Ascending aorta (tissue), 2 donors: ENCODE measurements at regions of chr4 and their contacts with region 1.

Region 1: DNA sequence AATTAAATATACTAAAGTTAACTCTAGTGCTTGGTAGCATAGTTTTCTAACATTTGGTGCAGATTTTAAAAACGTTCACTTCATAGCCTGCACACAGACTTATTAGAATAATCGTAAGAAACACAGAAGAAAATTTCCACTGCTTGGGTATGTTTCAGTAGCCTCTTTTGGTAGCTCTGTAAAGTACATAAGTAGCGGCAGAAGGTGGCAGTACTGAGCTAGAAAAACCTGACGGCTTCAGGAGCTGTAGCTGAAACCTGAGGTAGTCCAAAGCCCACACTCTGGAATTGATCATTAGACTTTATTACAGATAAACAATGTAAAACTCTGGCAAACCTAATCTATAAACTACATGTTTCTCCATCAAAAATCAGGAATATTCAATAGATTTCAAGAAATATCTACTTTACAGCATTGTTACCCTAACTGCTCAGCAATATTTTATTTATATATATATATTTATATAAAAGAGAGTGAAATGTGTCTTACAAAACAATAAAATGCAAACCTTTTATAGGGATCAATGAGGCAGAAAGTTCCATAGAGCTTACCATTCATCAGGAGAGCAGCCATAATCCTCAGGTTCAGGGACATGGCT is 88.2 kb downstream of the ATP8A1 start:
- DNase-seq: peak in 1 of 2 donors; percentile 71
- H3K4me3 ChIP-seq: no peak overlapping the region
- H3K27ac ChIP-seq: no peak overlapping the region
- H3K4me1 ChIP-seq: peaks cover 0 to 5% of the 10 kb centered on the region in 2 donors
- H3K27me3 ChIP-seq: no peaks in the 10 kb centered on the region
- CTCF ChIP-seq: peak; percentile 46 to 75 (median 62)

Region 2: GRCh38 chr4:42420140-42420539 is 148.6 kb before region 1 on chr4:
- intact Hi-C with region 1: no loop called
- DNase-seq: no peak
- H3K4me3 ChIP-seq: no peak overlapping the region
- H3K27ac ChIP-seq: no peak overlapping the region
- H3K4me1 ChIP-seq: no peaks in the 10 kb centered on the region
- H3K27me3 ChIP-seq: no peaks in the 10 kb centered on the region
- CTCF ChIP-seq: no peak

Region 3: DNA sequence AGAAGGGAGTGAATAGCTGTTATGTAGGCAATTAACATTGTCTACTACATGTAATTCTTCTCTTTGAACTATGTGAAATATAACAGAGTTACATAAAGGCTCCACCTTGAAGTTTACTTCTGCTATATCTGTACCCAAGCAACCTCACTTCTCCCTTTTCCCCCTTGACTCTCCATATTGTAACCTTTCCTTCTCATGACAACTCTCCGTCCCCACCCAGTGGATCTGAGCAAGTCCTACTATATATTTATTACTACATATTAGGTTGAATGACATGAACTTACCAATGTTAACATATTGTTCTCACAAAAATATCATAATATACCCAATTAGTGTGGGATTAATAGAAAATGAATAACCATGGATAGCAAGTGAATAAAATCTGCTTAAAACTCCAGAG is 181.4 kb after region 1 on chr4:
- intact Hi-C with region 1: loop called (anchors 5 kb)
- DNase-seq: no peak
- H3K4me3 ChIP-seq: no peak overlapping the region
- H3K27ac ChIP-seq: no peak overlapping the region
- H3K4me1 ChIP-seq: no peaks in the 10 kb centered on the region
- H3K27me3 ChIP-seq: no peaks in the 10 kb centered on the region
- CTCF ChIP-seq: peak in 1 of 3 experiments; percentile 32

Region 4: GRCh38 chr4:42865572-42866189 is 297.0 kb after region 1 on chr4:
- intact Hi-C with region 1: loop called (anchors 2 kb)
- DNase-seq: peak in 1 of 2 donors; percentile 67
- H3K4me3 ChIP-seq: no peak overlapping the region
- H3K27ac ChIP-seq: no peak overlapping the region
- H3K4me1 ChIP-seq: no peaks in the 10 kb centered on the region
- H3K27me3 ChIP-seq: no peaks in the 10 kb centered on the region
- CTCF ChIP-seq: peak in 2 of 3 experiments; percentile 64 to 68